ENCODE measurements at regions of chr7 and their contacts with region 1.

Region 1: GRCh38 chr7:2870471-2870931 is 26.4 kb upstream of the GNA12 start:
- DNase-seq: peak; percentile 30
- H3K4me3 ChIP-seq: no peak overlapping the region
- H3K27ac ChIP-seq: no peak overlapping the region
- H3K4me1 ChIP-seq: peaks cover 13% of the 10 kb centered on the region
- H3K27me3 ChIP-seq: no peaks in the 10 kb centered on the region
- CTCF ChIP-seq: no peak

Region 2: DNA sequence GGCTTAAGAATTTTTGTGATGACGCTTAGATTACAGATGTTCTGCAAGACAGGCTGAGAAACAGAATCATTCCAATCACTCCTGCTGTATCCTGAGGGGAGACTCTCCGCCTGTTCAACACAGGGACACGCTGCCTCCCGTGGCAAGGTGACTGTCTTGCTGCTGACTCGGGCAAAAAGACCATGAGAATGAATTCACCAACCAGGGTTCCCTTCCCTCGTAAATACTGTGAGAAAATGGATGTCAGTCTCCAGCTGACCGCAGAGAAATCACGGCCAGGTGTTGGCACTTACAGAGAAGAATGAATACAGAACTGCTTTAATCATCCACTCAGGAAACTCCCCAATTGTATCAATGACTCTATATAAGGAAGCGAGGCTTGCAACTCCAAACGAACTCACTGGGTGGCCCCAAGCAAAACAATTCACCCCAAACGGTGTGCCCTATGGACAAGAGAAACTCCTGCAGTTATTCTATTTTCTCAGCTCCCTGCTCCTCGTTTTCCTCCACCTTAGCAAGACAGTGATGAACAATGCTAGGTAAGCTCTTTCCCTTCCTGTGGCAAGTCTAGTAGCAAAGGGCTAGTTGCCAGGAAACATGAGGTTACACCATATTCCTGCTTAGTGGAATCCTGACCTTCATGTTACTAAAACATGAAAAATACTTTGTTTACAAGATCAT is 49.2 kb before region 1 on chr7:
- CTCF ChIA-PET with region 1: no interaction called
- dilution Hi-C with region 1: no loop called
- in situ Hi-C with region 1: no loop called
- intact Hi-C with region 1: loop called (anchors 5 kb)
- DNase-seq: peak; percentile 95
- H3K4me3 ChIP-seq: no peak overlapping the region
- H3K27ac ChIP-seq: peak overlapping the region; percentile 92
- H3K4me1 ChIP-seq: peaks cover 47% of the 10 kb centered on the region
- H3K27me3 ChIP-seq: no peaks in the 10 kb centered on the region
- CTCF ChIP-seq: peak; percentile 3 to 4

Region 3: GRCh38 chr7:3154912-3155494 is 284.5 kb after region 1 on chr7:
- CTCF ChIA-PET with region 1: no interaction called
- dilution Hi-C with region 1: no loop called
- in situ Hi-C with region 1: loop called in 1 of 2 experiments (anchors 10 kb)
- intact Hi-C with region 1: loop called (anchors 1 kb)
- DNase-seq: peak; percentile 46
- H3K4me3 ChIP-seq: no peak overlapping the region
- H3K27ac ChIP-seq: no peak overlapping the region
- H3K4me1 ChIP-seq: no peaks in the 10 kb centered on the region
- H3K27me3 ChIP-seq: no peaks in the 10 kb centered on the region
- CTCF ChIP-seq: peak; percentile 66 to 74

Region 4: DNA sequence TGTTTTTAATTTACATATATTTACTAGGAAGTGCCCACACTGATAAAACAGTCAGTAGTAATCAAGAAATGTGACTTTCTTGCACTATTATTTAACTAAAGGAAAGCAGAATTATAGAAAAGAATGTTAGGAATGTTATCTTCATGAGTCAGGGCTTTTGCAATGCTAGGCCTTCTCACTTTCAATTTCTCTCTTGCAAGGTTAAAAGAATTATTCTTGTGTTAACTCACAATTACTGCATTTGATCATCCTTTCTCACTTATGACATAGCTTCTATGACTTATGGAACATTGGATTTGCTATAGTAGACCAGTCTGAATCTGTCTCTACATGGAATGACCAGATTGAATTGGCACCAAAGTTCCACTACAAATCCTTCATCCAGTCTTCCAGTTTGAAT is 623.0 kb after region 1 on chr7:
- CTCF ChIA-PET with region 1: no interaction called
- dilution Hi-C with region 1: no loop called
- in situ Hi-C with region 1: no loop called
- intact Hi-C with region 1: no loop called
- DNase-seq: peak; percentile 30
- H3K4me3 ChIP-seq: no peak overlapping the region
- H3K27ac ChIP-seq: no peak overlapping the region
- H3K4me1 ChIP-seq: no peaks in the 10 kb centered on the region
- H3K27me3 ChIP-seq: no peaks in the 10 kb centered on the region
- CTCF ChIP-seq: no peak

Region 5: DNA sequence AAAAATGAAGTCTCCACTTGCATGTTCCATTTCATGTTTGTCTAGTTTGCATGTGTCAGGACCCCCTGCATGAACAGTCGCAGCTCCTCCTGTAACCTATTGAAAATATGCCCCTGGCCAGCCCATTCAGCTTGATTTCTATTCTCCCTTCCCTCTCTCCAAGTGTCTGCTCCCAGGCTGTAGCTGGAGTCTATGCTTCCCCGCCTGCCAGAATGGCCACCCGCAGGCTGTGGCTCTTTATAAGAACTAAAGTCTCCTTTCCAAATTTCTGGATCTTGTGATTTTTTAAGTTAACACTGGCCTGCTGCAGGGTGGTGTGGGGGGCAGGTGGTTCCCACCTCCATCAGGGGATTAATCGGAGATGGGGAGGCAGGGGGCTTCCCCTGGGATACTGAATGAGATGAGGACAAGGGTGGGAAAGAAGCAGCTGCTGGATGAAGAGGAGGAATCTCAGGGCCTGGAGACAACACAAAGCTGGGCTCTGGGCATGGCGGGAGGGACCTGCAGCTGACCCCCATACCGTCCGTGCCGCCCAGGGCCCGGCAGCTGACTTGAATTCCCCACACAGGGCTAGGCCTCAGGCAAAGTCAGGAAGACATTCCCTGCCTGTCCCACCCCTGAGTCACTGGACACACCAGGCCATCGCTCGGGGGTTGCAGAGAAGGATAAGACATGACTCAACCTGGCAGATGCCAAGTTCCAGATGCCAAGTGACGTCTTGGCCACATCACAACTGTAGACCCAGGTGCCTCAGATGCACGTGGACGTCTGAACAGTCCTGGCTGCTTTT is 1412.1 kb after region 1 on chr7:
- CTCF ChIA-PET with region 1: no interaction called
- dilution Hi-C with region 1: no loop called
- in situ Hi-C with region 1: no loop called
- intact Hi-C with region 1: loop called (anchors 10 kb)
- DNase-seq: peak; percentile 95
- H3K4me3 ChIP-seq: no peak overlapping the region
- H3K27ac ChIP-seq: no peak overlapping the region
- H3K4me1 ChIP-seq: no peaks in the 10 kb centered on the region
- H3K27me3 ChIP-seq: no peaks in the 10 kb centered on the region
- CTCF ChIP-seq: no peak

Measured in mammary epithelial cell (primary cell).